Lower leg skin (tissue), 4 donors: ENCODE measurements at regions of chr5 and their contacts with region 1.

Region 1: DNA sequence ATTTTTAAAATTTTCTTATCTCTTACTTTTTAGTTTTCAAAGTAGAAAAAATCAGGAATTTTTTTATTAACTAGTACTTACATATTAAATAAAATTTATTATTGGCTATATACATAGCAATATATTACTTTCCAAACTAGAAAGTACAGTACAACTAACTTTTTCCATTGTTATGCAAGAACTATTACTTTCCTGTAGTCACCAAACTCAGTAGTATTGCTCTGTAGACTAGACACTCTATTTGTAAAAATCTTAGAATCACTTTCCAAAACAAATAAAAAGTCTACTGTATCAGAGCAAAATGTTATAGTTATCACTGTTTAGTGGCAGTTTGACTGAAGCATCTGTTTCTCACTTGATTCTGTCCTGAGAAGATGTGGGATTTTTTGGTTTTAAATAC is 55.3 kb upstream of the MACIR start:
- DNase-seq: no peak
- H3K4me3 ChIP-seq: no peak overlapping the region
- CTCF ChIP-seq: no peak
- POLR2A ChIP-seq: no peak

Region 2: DNA sequence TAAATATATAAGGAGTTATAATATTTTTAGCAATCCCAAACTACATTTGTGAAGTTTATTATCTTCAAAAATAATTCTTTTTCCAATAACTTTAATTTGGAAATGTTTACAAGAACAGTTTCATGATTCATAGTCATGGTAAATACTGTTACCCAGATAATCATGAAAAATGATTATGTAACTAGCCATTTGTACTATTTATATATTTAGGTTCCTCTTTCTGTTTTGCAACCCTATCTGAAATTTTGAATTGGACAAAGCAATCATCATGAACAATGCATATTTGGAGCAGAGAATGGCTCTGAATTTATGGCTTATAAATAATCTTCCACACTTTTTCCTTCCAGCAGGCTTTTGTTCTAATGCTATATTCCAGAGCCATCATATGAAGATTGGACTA is 1406.8 kb before region 1 on chr5:
- intact Hi-C with region 1: loop called (anchors 5 kb)
- DNase-seq: no peak
- H3K4me3 ChIP-seq: no peak overlapping the region
- CTCF ChIP-seq: no peak
- POLR2A ChIP-seq: no peak

Region 3: DNA sequence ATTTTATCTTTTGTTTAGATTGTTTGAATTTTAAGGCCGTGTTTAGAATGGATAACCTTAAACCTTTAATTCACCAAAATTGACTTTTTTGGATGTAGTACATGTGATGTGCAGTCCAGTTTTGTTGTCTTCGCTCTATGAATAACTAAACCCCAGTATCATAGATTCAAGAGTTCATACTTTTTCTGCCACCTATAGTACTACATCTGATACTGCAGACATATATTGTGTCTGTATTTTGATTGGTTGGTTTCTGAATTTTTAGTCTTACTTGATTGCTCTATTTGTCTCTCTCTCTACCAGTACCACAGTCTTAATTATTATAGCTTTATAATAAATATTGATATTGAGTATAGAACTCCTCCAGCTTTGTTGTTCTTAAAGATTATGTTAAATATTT is 25.1 kb before region 1 on chr5:
- intact Hi-C with region 1: no loop called
- DNase-seq: no peak
- H3K4me3 ChIP-seq: no peak overlapping the region
- CTCF ChIP-seq: no peak
- POLR2A ChIP-seq: no peak

Region 4: DNA sequence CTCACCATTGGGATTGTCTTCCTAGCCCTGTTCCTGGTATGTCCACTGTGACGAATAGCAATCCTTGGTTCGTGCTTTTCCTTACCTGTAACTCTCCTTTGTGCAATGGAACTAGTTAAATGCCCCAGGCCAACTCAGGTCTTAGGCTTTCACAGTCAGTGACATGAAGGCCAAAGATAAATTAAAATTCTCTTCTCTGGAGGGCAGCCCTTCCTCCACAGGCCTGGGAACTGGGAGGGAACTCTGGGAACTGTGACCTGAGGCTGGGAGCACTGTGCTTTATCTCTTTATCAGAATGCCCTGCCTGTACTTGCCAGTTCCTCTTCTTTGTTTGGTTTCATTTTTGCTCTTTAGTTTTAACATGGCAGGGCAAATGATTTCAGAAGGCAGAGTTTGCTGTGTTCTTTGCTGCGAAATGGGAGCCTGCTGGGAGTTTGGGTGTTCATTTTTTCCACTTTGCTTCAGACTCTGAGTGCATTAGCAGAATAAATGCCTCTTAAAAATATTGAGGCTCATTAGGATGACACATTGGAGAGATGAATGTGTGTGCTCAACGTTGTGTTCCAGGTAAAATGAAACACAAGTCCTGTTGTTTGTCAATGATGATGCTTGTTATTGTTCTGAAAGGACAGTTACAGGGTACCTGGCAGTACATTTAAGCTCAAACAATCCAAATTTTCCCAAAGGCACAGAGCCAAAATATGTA is 241.3 kb after region 1 on chr5:
- intact Hi-C with region 1: no loop called
- DNase-seq: no peak
- H3K4me3 ChIP-seq: no peak overlapping the region
- CTCF ChIP-seq: no peak
- POLR2A ChIP-seq: no peak